ENCODE measurements at regions of chr12 and their contacts with region 1.

Region 1: GRCh38 chr12:53825246-53826081 is 73.7 kb upstream of the CISTR start:
- DNase-seq: peak; percentile 69
- H3K4me3 Mint-ChIP-seq: peak overlapping the region; percentile 10
- H3K27ac Mint-ChIP-seq: peak overlapping the region; percentile 72
- H3K4me1 Mint-ChIP-seq: peaks cover 72% of the 10 kb centered on the region
- H3K27me3 Mint-ChIP-seq: no peaks in the 10 kb centered on the region
- CTCF ChIP-seq: no peak

Region 2: GRCh38 chr12:53805127-53805466 is 20.4 kb before region 1 on chr12:
- CTCF ChIA-PET with region 1: interaction called, 8 read pairs
- intact Hi-C with region 1: loop called (anchors 2 kb)
- DNase-seq: no peak
- H3K4me3 Mint-ChIP-seq: no peak overlapping the region
- H3K27ac Mint-ChIP-seq: peak overlapping the region; percentile 6
- H3K4me1 Mint-ChIP-seq: peaks cover 59% of the 10 kb centered on the region
- H3K27me3 Mint-ChIP-seq: no peaks in the 10 kb centered on the region
- CTCF ChIP-seq: no peak

Region 3: DNA sequence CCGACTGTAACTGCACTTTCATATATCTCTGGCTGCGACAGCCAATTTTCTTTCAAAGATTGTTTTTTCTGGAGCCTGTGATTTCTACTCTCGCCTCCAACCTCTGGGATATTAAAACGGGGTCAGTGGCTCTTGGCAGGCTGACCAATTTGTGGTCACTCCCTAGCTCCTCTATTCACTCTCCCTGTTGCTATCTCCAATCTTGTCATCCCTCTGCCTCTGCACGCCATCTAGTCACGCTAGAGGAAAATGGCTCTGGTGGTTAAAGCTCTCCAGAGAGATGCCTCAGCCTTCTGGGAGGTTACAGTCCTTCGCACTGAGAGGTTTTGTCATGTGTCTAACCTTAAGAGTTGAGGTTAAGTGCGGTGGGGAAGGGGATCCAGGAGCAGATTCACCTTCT is 13.9 kb before region 1 on chr12:
- CTCF ChIA-PET with region 1: interaction called, 18 read pairs
- intact Hi-C with region 1: no loop called
- DNase-seq: no peak
- H3K4me3 Mint-ChIP-seq: no peak overlapping the region
- H3K27ac Mint-ChIP-seq: no peak overlapping the region
- H3K4me1 Mint-ChIP-seq: peaks cover 12% of the 10 kb centered on the region
- H3K27me3 Mint-ChIP-seq: no peaks in the 10 kb centered on the region
- CTCF ChIP-seq: no peak

Measured in Calu3 (cell line).